Activated naive CD4-positive, alpha-beta T cell treated with anti-CD3 and anti-CD28 coated beads for 36 hours (primary cell): ENCODE measurements at regions of chr4 and their contacts with region 1.

Region 1: GRCh38 chr4:15396157-15396800 is 31.6 kb upstream of the C1QTNF7 start:
- DNase-seq: peak; percentile 79
- H3K4me3 Mint-ChIP-seq: no peak overlapping the region
- H3K27ac Mint-ChIP-seq: no peak overlapping the region
- H3K4me1 Mint-ChIP-seq: peaks cover 26% of the 10 kb centered on the region
- H3K27me3 Mint-ChIP-seq: no peaks in the 10 kb centered on the region

Region 2: GRCh38 chr4:15238720-15239119 is 157.6 kb before region 1 on chr4:
- CTCF ChIA-PET with region 1: interaction called, 134 read pairs
- intact Hi-C with region 1: loop called (anchors 1 kb)
- DNase-seq: peak; percentile 66
- H3K4me3 Mint-ChIP-seq: no peak overlapping the region
- H3K27ac Mint-ChIP-seq: no peak overlapping the region
- H3K4me1 Mint-ChIP-seq: peaks cover 9% of the 10 kb centered on the region
- H3K27me3 Mint-ChIP-seq: no peaks in the 10 kb centered on the region

Region 3: DNA sequence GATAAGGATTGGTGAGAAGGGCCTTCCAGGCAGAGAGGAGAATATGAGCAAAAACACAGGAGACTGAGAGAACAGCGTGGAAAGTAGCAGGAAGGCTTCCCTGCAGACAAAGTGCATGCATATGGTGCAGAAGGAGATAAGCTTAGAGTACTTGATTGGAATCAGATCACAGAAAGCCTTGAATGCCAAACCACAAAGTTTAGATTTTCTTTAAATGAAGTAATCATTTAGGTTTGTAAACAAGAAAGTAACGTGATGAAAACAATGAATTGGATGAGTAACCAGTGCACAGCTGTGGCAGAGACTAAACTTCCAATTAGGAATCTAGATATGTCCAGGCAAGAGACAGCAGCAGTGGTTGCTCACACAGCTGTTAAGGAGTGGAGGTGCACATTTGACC is 52.2 kb before region 1 on chr4:
- CTCF ChIA-PET with region 1: no interaction called
- intact Hi-C with region 1: no loop called
- DNase-seq: no peak
- H3K4me3 Mint-ChIP-seq: no peak overlapping the region
- H3K27ac Mint-ChIP-seq: no peak overlapping the region
- H3K4me1 Mint-ChIP-seq: peaks cover under 1% of the 10 kb centered on the region
- H3K27me3 Mint-ChIP-seq: no peaks in the 10 kb centered on the region

Region 4: DNA sequence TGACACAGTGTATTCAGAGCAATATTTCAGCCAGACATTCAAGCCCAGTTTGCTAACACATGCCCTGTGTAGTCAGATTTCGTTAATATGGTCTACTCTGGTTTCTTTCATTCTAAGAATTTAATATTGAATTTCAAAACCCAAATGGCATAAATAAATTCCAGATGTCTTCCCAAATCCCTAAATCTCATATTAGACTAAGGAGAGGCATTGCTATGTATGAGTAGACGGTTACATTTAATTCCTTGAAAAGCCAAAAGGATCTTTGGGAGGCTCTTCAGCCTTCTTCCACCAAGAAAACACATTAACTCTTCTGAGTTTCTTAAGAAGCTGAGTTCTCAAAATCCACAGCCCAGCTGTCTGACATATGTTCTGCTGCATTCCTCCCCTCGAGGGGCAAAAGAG is 34.7 kb before region 1 on chr4:
- CTCF ChIA-PET with region 1: interaction called, 3 read pairs
- intact Hi-C with region 1: loop called (anchors 5 kb)
- DNase-seq: no peak
- H3K4me3 Mint-ChIP-seq: no peak overlapping the region
- H3K27ac Mint-ChIP-seq: no peak overlapping the region
- H3K4me1 Mint-ChIP-seq: peaks cover 2% of the 10 kb centered on the region
- H3K27me3 Mint-ChIP-seq: no peaks in the 10 kb centered on the region

Region 5: GRCh38 chr4:15375667-15376066 is 20.6 kb before region 1 on chr4:
- CTCF ChIA-PET with region 1: interaction called, 40 read pairs
- intact Hi-C with region 1: loop called (anchors 1 kb)
- DNase-seq: no peak
- H3K4me3 Mint-ChIP-seq: no peak overlapping the region
- H3K27ac Mint-ChIP-seq: peak overlapping the region; percentile 12
- H3K4me1 Mint-ChIP-seq: peaks cover 26% of the 10 kb centered on the region
- H3K27me3 Mint-ChIP-seq: no peaks in the 10 kb centered on the region

Region 6: DNA sequence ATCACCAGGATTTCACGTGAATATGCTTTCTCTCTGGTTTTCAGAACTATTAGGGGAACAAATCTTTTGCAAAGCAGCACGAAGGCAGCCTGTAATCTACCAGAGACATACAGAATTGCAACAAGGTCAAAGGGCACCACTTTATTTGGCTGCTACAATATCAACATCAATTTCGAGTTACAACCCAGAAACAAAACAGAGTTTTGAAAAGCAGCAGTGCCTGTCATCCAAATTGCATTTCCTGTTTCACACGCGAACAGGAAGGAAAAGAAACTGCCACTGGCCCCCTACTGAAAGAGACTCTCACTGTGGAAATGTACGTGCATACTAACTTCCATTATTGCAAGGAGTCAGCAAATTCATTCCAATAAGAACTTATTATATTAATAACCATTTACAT is 14.5 kb after region 1 on chr4:
- CTCF ChIA-PET with region 1: interaction called, 20 read pairs
- intact Hi-C with region 1: loop called (anchors 1 kb)
- DNase-seq: peak; percentile 52
- H3K4me3 Mint-ChIP-seq: peak overlapping the region; percentile 29
- H3K27ac Mint-ChIP-seq: peak overlapping the region; percentile 68
- H3K4me1 Mint-ChIP-seq: peaks cover 40% of the 10 kb centered on the region
- H3K27me3 Mint-ChIP-seq: no peaks in the 10 kb centered on the region

Region 7: GRCh38 chr4:15428611-15429010 is 32.3 kb after region 1 on chr4:
- CTCF ChIA-PET with region 1: interaction called, 6 read pairs
- intact Hi-C with region 1: loop called (anchors 1 kb)
- DNase-seq: no peak
- H3K4me3 Mint-ChIP-seq: no peak overlapping the region
- H3K27ac Mint-ChIP-seq: no peak overlapping the region
- H3K4me1 Mint-ChIP-seq: peaks cover 25% of the 10 kb centered on the region
- H3K27me3 Mint-ChIP-seq: no peaks in the 10 kb centered on the region

Region 8: GRCh38 chr4:15457406-15458201 is 61.3 kb after region 1 on chr4:
- CTCF ChIA-PET with region 1: interaction called, 17 read pairs
- intact Hi-C with region 1: loop called (anchors 1 kb)
- DNase-seq: no peak
- H3K4me3 Mint-ChIP-seq: no peak overlapping the region
- H3K27ac Mint-ChIP-seq: no peak overlapping the region
- H3K4me1 Mint-ChIP-seq: peaks cover 6% of the 10 kb centered on the region
- H3K27me3 Mint-ChIP-seq: no peaks in the 10 kb centered on the region